Activated CD8-positive, alpha-beta T cell treated with anti-CD3 and anti-CD28 coated beads for 36 hours (primary cell): ENCODE measurements at regions of chr2 and their contacts with region 1.

Region 1: GRCh38 chr2:219642465-219643080 is 15.1 kb downstream of the SLC4A3 start:
- DNase-seq: peak; percentile 97
- ATAC-seq: peak; percentile 100
- H3K4me3 Mint-ChIP-seq: no peak overlapping the region
- H3K27ac Mint-ChIP-seq: no peak overlapping the region
- H3K4me1 Mint-ChIP-seq: peaks cover 12% of the 10 kb centered on the region
- H3K27me3 Mint-ChIP-seq: peaks cover 14% of the 10 kb centered on the region
- CTCF ChIP-seq: peak; percentile 98

Region 2: DNA sequence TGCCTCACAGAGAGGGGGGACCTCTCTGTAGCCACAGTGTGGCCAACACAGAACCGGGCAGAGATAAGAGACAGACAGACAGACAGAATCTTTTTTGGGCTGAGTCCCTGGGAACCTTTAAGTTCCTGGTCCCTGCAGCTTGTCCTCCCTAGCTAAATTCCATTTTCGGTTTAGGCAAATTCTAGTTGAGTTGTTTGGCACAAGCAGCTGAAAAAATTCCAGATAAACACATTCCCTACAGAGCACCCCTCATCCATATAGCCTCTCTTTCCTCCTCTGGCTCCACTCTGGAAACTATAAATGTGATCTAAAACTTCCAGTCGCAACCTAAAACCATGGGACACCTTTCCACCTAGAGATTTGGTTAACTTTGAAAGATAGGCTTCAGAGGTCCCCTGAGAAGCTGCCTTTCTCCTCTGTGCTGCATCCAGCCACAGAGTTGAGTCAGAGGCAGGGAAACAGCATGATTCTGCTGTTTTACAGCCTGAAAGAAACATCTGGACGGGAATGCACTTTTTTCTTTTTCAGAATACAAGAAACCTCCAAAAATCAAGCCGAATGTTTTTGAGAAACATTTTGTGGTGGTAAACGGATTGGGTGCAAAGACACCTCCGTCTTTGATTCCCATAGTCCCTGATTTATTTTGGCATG is 15.7 kb after region 1 on chr2:
- CTCF ChIA-PET with region 1: interaction called, 10 read pairs
- POLR2A ChIA-PET with region 1: no interaction called
- intact Hi-C with region 1: no loop called
- DNase-seq: no peak
- ATAC-seq: no peak
- H3K4me3 Mint-ChIP-seq: no peak overlapping the region
- H3K27ac Mint-ChIP-seq: no peak overlapping the region
- H3K4me1 Mint-ChIP-seq: no peaks in the 10 kb centered on the region
- H3K27me3 Mint-ChIP-seq: peaks cover 28% of the 10 kb centered on the region
- CTCF ChIP-seq: no peak